Endothelial cell of umbilical vein (primary cell): ENCODE measurements at regions of chr11 and their contacts with region 1.

Region 1: GRCh38 chr11:95884376-95884775 is 39.5 kb downstream of the MTMR2 start:
- DNase-seq: peak; percentile 73
- H3K4me3 ChIP-seq: no peak overlapping the region
- H3K27ac ChIP-seq: peak overlapping the region; percentile 20
- H3K4me1 ChIP-seq: peaks cover 8% of the 10 kb centered on the region
- H3K27me3 ChIP-seq: no peaks in the 10 kb centered on the region
- CTCF ChIP-seq: no peak
- POLR2A ChIP-seq: no peak

Region 2: GRCh38 chr11:95212609-95213008 is 671.8 kb before region 1 on chr11:
- CTCF ChIA-PET with region 1: no interaction called
- POLR2A ChIA-PET with region 1: no interaction called
- dilution Hi-C with region 1: no loop called
- intact Hi-C with region 1: no loop called
- DNase-seq: no peak
- H3K4me3 ChIP-seq: no peak overlapping the region
- H3K27ac ChIP-seq: no peak overlapping the region
- H3K4me1 ChIP-seq: no peaks in the 10 kb centered on the region
- H3K27me3 ChIP-seq: no peaks in the 10 kb centered on the region
- CTCF ChIP-seq: no peak
- POLR2A ChIP-seq: no peak

Region 3: DNA sequence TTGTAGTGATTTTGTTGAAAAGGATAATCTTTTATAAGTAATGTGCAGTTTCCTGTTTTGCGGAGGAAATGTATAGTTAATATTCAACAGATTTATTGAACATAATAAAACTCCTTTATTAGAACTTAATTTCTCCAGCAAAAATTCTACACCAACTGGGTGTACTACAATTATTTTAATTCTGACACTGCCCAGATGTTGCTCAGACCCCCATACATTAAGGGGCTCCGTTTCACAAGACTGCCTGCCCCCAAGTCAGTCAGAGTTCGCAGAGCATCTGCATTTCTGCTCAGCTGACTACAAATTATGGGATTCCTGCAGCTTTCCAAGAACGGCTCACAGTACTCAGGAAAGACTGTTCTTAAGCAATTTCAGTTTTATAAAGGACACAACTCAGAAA is 87.9 kb before region 1 on chr11:
- CTCF ChIA-PET with region 1: no interaction called
- POLR2A ChIA-PET with region 1: no interaction called
- dilution Hi-C with region 1: no loop called
- intact Hi-C with region 1: no loop called
- DNase-seq: no peak
- H3K4me3 ChIP-seq: no peak overlapping the region
- H3K27ac ChIP-seq: no peak overlapping the region
- H3K4me1 ChIP-seq: peaks cover 6% of the 10 kb centered on the region
- H3K27me3 ChIP-seq: no peaks in the 10 kb centered on the region
- CTCF ChIP-seq: no peak
- POLR2A ChIP-seq: no peak

Region 4: DNA sequence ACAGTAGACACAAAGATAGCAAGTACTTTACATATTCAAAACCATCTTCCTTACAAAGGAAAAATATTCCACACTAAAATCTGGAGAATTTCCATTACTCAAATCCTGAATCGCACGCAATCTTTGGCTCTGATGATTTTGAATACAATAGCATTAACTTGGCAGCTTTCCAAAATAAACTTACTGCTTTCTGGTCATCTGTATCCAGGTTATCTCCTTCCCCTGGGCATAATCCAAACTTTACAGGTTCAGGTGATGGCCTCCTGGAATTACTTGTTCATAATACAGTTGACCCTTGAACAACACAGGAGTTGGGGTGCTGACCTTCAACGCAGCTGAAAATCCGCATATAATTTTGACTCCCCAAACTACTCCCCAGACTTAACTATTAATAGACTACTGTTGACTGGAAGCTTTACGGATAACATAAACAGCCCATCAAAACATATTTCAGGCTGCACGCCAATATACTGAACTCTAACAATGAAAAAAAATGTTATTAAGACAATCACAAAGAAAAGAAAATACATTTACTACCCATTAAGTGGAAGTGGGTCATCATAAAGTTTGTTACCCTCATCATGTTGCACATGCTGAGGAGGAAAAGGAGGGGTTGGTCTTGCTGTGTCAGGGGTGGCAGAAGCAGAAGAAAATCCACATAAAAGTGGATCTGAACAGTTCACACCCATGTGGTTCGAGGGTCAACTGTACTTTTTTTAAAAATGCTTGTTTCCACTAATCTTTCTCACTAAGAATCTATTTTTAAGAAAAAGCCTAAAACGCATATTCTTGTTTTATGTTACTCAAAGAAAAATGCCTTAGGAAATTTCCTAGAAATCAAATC is 33.0 kb after region 1 on chr11:
- CTCF ChIA-PET with region 1: no interaction called
- POLR2A ChIA-PET with region 1: no interaction called
- dilution Hi-C with region 1: no loop called
- intact Hi-C with region 1: loop called (anchors 5 kb)
- DNase-seq: peak; percentile 97
- H3K4me3 ChIP-seq: peak overlapping the region in 1 of 3 experiments; percentile 17
- H3K27ac ChIP-seq: peak overlapping the region; percentile 77
- H3K4me1 ChIP-seq: peaks cover 54% of the 10 kb centered on the region
- H3K27me3 ChIP-seq: no peaks in the 10 kb centered on the region
- CTCF ChIP-seq: no peak
- POLR2A ChIP-seq: no peak